ENCODE measurements at regions of chr20 and their contacts with region 1.

Region 1: GRCh38 chr20:45095753-45096371 is 5.1 kb downstream of the KCNS1 start:
- DNase-seq: peak; percentile 73
- H3K4me3 Mint-ChIP-seq: no peak overlapping the region
- H3K27ac Mint-ChIP-seq: no peak overlapping the region
- H3K4me1 Mint-ChIP-seq: peaks cover 12% of the 10 kb centered on the region
- H3K27me3 Mint-ChIP-seq: peaks cover 32% of the 10 kb centered on the region

Region 2: DNA sequence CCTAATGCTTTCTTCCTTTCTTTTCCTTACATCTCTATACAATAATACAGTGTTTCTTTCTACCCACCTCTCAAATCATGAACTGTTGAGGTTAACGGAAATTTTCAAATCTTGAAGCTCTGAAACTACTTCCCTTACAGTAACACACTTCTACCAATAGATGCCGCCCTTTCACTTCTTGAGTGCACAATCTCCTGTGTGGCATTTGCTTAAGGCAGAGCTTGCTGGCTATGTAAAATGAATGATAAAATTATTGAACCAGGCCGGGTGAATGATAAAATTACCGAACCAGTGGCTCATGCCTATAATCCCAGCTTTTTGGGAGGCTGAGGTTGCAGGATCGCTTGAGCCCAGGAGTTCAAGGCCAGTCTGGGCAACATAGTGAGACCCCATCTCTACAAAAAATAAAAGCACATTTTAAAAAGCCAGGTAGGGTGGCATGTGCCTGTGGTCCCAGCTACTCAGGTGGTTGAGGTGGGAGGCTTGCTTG is 51.7 kb before region 1 on chr20:
- CTCF ChIA-PET with region 1: interaction called, 18 read pairs
- POLR2A ChIA-PET with region 1: interaction called, 3 read pairs
- DNase-seq: peak; percentile 62
- H3K4me3 Mint-ChIP-seq: no peak overlapping the region
- H3K27ac Mint-ChIP-seq: peak overlapping the region; percentile 32
- H3K4me1 Mint-ChIP-seq: peaks cover 63% of the 10 kb centered on the region
- H3K27me3 Mint-ChIP-seq: no peaks in the 10 kb centered on the region

Region 3: GRCh38 chr20:45052698-45053429 is 43.0 kb before region 1 on chr20:
- CTCF ChIA-PET with region 1: interaction called, 18 read pairs
- POLR2A ChIA-PET with region 1: no interaction called
- DNase-seq: peak; percentile 45
- H3K4me3 Mint-ChIP-seq: no peak overlapping the region
- H3K27ac Mint-ChIP-seq: peak overlapping the region; percentile 72
- H3K4me1 Mint-ChIP-seq: peaks cover 67% of the 10 kb centered on the region
- H3K27me3 Mint-ChIP-seq: no peaks in the 10 kb centered on the region

Region 4: DNA sequence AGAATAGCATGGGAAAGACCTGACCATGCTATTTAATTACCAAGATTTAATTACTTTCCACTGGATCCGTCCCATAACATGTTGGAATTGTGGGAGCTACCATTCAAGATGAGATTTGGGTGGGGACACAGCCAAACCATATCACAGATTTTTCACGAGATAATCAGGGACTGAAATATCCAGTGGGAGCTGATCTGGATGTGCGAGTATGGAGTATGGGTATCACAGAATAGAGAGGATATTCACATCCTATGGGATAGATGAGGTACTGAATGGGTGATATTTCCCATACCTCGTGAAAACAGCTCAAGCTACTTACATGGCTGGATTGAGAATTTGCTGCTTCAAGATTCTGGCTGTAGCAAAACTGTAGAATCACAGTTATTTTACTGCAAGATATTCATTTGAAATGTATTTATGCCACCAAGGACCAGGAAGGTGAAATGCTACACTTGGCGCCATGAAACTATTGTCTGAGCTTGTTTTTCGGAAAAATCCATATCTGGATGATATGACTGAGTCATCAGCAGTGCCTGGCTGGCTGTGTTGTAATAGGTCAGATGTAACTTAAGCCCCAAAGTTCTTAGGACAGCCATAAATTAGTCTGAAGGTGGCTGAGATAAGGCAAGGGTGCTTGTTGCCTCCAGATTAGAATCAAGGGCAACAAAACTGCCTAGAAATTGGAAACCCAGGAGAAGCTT is 24.8 kb before region 1 on chr20:
- CTCF ChIA-PET with region 1: interaction called, 12 read pairs
- POLR2A ChIA-PET with region 1: no interaction called
- DNase-seq: no peak
- H3K4me3 Mint-ChIP-seq: no peak overlapping the region
- H3K27ac Mint-ChIP-seq: no peak overlapping the region
- H3K4me1 Mint-ChIP-seq: peaks cover 11% of the 10 kb centered on the region
- H3K27me3 Mint-ChIP-seq: no peaks in the 10 kb centered on the region

Region 5: GRCh38 chr20:45293041-45294002 is 197.5 kb after region 1 on chr20:
- CTCF ChIA-PET with region 1: interaction called, 12 read pairs
- POLR2A ChIA-PET with region 1: no interaction called
- DNase-seq: peak; percentile 81
- H3K4me3 Mint-ChIP-seq: peak overlapping the region; percentile 62
- H3K27ac Mint-ChIP-seq: no peak overlapping the region
- H3K4me1 Mint-ChIP-seq: peaks cover 13% of the 10 kb centered on the region
- H3K27me3 Mint-ChIP-seq: peaks cover 36% of the 10 kb centered on the region

Measured in activated CD4-positive, alpha-beta T cell treated with anti-CD3 and anti-CD28 coated beads, Interleukin-2, amount 10 ng/mL, durations not matched to agents 7 days and 5 days (primary cell).